RWPE1 (cell line): ENCODE measurements at regions of chr18 and their contacts with region 1.

Region 1: DNA sequence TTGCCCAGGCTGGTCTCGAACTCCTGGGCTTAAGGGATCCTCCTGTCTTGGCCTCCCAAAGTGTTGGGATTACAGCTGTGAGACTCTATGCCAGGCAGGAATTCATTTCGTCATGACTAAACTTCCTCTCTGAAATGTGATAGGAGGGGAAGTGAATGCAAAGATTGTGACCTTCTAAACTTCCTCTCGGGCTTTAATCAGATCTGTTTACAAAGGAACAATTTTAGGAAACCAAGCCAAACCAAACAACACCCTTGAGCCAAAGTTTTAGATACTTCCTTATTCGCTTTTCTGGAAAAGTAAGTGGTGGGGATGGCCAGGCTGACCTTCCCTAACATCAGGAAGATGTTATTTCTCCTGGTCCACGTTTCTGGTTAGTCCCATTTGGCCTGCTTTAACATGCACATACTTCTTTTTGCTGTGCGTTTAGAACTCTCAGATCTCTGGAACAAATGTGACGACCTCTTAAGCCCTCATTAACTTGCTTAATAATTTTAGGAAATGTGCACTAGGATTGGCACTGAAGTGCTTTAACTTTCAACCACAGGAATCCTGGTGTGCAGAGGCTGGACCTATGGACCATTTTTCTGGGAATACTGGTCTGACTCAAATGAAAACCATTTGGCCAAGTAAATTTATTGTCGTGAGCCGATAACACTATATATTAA is 33.2 kb upstream of the YES1 start:
- DNase-seq: peak; percentile 36
- H3K27ac ChIP-seq: no peak overlapping the region
- CTCF ChIP-seq: no peak

Region 2: GRCh38 chr18:245282-245847 is 599.9 kb before region 1 on chr18:
- CTCF ChIA-PET with region 1: no interaction called
- POLR2A ChIA-PET with region 1: no interaction called
- DNase-seq: no peak
- H3K27ac ChIP-seq: no peak overlapping the region
- CTCF ChIP-seq: no peak

Region 3: GRCh38 chr18:731185-731584 is 114.1 kb before region 1 on chr18:
- CTCF ChIA-PET with region 1: no interaction called
- POLR2A ChIA-PET with region 1: no interaction called
- DNase-seq: no peak
- H3K27ac ChIP-seq: no peak overlapping the region
- CTCF ChIP-seq: no peak

Region 4: GRCh38 chr18:961644-962355 is 116.5 kb after region 1 on chr18:
- CTCF ChIA-PET with region 1: interaction called, 10 read pairs
- POLR2A ChIA-PET with region 1: no interaction called
- DNase-seq: peak; percentile 30
- H3K27ac ChIP-seq: no peak overlapping the region
- CTCF ChIP-seq: peak; percentile 84